ENCODE measurements at regions of chr4 and their contacts with region 1.

Region 1: DNA sequence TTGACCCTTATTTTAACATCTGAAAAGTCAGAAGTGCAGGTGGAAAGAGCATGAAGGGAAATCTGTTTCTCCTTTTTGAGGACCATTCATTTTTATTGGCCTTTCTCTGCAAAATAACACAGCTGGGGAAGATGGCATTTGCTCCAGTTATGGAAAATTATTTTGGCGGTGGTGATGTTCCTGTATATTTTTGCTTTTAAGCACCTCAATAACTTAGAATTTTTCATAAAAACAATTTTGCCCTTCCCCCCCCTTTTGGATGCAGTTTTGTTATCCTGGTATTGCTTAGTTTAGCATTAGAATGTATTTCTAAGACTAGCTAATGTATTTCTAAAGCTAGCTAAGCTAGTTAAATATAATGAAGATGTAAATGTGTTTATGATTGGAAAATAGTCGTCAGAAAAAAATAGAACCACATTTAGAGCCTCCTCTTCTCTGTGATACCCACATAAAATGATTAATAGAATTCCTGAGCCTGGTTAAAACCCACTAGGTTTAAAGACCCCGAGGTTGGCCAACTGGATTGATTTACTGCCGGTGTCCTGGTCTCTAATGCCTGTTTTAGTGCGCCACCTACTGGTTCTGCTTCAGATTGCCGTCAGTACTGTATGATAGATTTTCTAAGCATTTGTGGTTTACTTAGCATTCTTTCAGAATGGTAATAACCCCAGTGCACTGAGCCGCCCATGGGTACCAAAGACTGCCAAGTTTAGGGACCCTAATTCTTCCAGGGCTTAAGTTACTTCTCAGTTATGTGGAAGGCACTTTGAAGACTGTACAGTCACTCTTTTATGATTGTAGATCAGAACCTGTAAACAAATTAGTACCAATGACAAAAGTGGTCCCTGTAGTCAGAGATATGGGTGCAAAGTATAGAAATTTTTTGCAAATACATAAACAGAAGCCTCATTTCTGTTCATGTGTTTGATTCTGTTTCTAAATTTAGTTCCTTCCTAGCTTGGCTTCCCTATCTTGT is 11.4 kb downstream of the KLF3 start:
- DNase-seq: peak; percentile 68
- ATAC-seq: peak; percentile 55
- H3K4me3 Mint-ChIP-seq: peak overlapping the region; percentile 74
- H3K27ac Mint-ChIP-seq: peak overlapping the region; percentile 76
- H3K4me1 Mint-ChIP-seq: peaks cover 51% of the 10 kb centered on the region
- H3K27me3 Mint-ChIP-seq: no peaks in the 10 kb centered on the region

Region 2: DNA sequence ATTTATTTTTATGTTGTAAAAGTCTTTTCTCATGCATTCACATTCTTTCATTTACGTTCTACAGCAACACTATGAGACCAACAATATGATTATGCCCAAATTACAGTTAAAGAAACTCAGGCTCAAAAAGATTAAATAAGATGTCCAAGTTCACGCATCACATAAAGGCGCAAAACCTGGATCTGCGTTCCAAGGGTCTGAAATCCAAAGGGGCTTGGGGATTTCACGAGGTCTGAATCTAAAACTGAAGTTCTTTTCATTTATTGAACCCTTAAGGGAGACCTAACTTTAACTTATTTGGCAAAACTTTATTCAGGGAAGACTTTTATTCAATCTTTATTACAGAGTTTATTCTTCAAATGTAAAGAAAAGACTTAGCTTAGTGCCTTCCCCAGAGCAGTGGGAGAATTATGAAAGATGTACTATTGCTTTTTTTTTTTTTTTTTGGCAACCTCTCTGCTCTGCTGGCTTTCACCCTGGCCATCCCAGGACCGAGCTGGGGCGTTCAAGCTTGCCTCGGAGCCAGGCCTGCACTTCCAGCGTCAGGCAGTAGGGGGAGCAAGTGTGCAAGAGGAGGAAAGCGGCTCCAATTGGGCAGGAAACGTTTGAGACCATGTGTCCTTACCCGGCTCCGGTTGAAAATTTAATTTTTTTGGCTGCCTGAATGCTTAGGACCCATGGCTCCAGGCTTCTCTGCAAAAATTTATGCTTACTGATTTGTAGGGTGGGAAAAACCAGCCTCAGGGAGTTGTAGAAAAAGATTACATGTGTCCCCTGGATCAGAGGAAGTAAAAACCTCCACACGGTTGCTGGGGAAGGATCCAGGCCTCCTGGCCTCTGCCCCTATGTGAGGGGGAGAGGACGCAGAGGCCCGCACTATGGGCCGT is 355.7 kb before region 1 on chr4:
- POLR2A ChIA-PET with region 1: interaction called, 14 read pairs
- DNase-seq: peak; percentile 96
- ATAC-seq: peak; percentile 64
- H3K4me3 Mint-ChIP-seq: peak overlapping the region; percentile 84
- H3K27ac Mint-ChIP-seq: peak overlapping the region; percentile 90
- H3K4me1 Mint-ChIP-seq: peaks cover 28% of the 10 kb centered on the region
- H3K27me3 Mint-ChIP-seq: no peaks in the 10 kb centered on the region